CD8-positive, alpha-beta memory T cell (primary cell): ENCODE measurements at regions of chr11 and their contacts with region 1.

Region 1: DNA sequence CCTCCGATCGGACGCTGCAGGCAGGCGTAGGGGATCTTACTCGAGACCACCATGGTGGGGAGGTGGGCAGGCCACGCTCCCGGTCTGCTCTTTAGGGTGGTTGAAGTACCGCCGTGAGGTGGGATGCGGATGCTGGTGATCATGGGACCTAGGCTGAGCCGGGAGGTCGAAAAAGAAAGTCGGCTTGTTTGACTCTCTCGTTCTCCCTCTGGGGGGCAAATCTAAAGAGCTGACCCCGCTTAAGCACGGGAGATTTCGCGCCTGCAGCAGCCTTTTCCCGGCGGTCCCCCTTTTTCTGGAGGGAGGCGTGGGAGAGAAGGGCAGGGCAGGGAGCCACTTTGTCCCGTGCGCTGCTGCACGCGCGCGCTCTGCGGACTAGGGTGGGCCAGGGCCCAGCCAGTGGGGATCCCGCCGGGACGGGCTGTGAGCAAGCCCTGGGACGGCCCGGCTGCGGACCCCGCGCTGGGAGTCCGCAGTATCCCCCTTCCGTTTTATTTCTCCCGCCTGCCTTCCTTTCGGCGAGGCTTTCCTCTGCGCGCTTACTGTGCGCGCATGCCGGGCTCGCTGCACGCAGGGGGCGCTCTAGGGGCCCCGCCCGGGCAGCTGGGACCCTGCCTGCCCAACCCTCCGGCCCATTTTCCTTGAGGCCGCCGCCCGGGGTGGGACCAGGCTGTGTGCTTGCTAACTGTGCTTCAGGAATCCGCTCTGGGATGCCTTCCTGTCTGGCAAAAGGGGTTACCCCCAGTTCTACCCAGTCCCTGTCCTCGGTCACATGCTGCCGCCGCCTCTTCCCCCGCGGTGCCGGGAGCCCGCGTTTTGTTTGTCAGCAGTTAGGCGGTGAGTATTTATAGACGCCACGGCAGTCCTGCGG is 81.0 kb downstream of the PRR5L start:
- DNase-seq: peak; percentile 2 to 75 (median 53)
- H3K4me3 ChIP-seq: peak overlapping the region; percentile 84
- H3K4me3 Mint-ChIP-seq: peak overlapping the region; percentile 99 to 100 (median 99)
- H3K27ac ChIP-seq: peak overlapping the region; percentile 76
- H3K27ac Mint-ChIP-seq: peak overlapping the region; percentile 70 to 98 (median 96)
- H3K4me1 ChIP-seq: peaks cover 19% of the 10 kb centered on the region
- H3K4me1 Mint-ChIP-seq: peaks cover 43 to 66% (median 65%) of the 10 kb centered on the region in 3 donors
- H3K27me3 ChIP-seq: no peaks in the 10 kb centered on the region
- H3K27me3 Mint-ChIP-seq: peaks cover 4 to 7% of the 10 kb centered on the region in 2 donors

Region 2: DNA sequence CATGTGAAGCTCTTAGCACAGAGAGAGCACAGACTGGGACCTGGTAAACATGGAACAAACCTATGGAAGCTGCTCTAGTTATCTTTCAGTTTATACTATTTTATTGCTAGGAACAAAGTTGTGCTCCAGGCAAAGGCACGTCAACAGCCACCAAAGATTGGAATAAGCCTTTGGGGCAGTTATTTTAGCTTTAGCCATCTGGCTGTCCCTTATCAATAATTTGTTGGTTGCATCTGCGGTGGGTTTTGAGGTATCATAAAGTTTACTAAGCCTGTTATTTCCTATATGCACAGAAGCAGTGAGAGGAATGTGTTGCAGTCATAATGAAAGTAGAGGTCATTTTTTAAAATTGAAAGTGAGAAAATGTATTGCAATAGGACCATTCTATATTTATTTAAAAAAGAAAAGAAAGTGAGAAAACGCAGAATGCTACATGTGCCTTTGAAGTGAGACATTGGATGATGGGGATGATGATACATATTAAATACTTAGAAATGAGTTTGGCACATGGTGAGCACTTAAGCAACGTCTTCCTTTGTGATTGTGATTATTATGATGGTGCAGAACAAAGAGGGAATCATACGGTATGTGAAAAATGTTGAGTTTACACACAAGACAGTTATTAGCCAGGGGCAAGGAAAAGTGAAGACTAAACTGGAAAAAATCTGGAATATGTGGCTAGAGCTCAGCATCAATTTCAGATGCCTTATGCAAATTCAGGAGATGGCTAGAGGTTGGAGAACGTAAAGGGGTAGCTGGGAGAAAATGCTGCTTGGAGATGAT is 22.7 kb before region 1 on chr11:
- CTCF ChIA-PET with region 1: interaction called, 45 read pairs
- POLR2A ChIA-PET with region 1: interaction called, 20 read pairs
- DNase-seq: no peak
- H3K4me3 ChIP-seq: no peak overlapping the region
- H3K4me3 Mint-ChIP-seq: peak overlapping the region in 2 of 7 donors; percentile 10 to 52
- H3K27ac ChIP-seq: no peak overlapping the region
- H3K27ac Mint-ChIP-seq: peak overlapping the region in 7 of 8 donors; percentile 20 to 91 (median 72)
- H3K4me1 ChIP-seq: peaks cover 23% of the 10 kb centered on the region
- H3K4me1 Mint-ChIP-seq: peaks cover 46 to 83% (median 75%) of the 10 kb centered on the region in 3 donors
- H3K27me3 ChIP-seq: no peaks in the 10 kb centered on the region
- H3K27me3 Mint-ChIP-seq: peaks cover 0 to 9% of the 10 kb centered on the region in 2 donors

Region 3: GRCh38 chr11:36363361-36364268 is 13.5 kb before region 1 on chr11:
- CTCF ChIA-PET with region 1: interaction called, 22 read pairs
- POLR2A ChIA-PET with region 1: interaction called, 8 read pairs
- DNase-seq: no peak
- H3K4me3 ChIP-seq: no peak overlapping the region
- H3K4me3 Mint-ChIP-seq: peak overlapping the region in 3 of 7 donors; percentile 19 to 56 (median 25)
- H3K27ac ChIP-seq: no peak overlapping the region
- H3K27ac Mint-ChIP-seq: peak overlapping the region in 5 of 8 donors; percentile 44 to 78 (median 65)
- H3K4me1 ChIP-seq: peaks cover 14% of the 10 kb centered on the region
- H3K4me1 Mint-ChIP-seq: peaks cover 30 to 62% (median 62%) of the 10 kb centered on the region in 3 donors
- H3K27me3 ChIP-seq: no peaks in the 10 kb centered on the region
- H3K27me3 Mint-ChIP-seq: peaks cover 4 to 8% of the 10 kb centered on the region in 2 donors

Region 4: DNA sequence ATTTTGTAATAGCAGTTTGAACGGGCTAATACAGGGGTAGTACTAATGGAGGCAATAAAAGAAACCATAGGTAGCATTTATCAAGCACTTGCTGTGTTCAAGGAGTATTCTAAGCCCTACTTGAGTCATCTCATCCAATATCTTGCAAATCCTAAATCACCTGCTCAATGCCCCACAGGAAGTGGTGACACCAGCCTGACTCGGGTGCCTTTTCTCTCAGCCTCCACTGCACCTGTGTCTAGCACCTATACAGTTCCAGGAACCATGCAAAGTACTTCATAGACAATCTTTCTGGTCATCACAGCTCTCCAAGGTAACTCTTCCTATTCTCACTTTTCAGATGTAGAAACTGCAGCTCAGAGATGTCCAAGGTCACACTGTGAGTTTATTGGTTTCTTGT is 16.9 kb after region 1 on chr11:
- CTCF ChIA-PET with region 1: interaction called, 20 read pairs
- POLR2A ChIA-PET with region 1: interaction called, 3 read pairs
- DNase-seq: no peak
- H3K4me3 ChIP-seq: no peak overlapping the region
- H3K4me3 Mint-ChIP-seq: peak overlapping the region in 5 of 7 donors; percentile 9 to 19 (median 9)
- H3K27ac ChIP-seq: no peak overlapping the region
- H3K27ac Mint-ChIP-seq: peak overlapping the region; percentile 18 to 84 (median 50)
- H3K4me1 ChIP-seq: peaks cover 25% of the 10 kb centered on the region
- H3K4me1 Mint-ChIP-seq: peaks cover 53 to 82% (median 64%) of the 10 kb centered on the region in 3 donors
- H3K27me3 ChIP-seq: no peaks in the 10 kb centered on the region
- H3K27me3 Mint-ChIP-seq: no peaks in the 10 kb centered on the region

Region 5: GRCh38 chr11:36411202-36411640 is 34.1 kb after region 1 on chr11:
- CTCF ChIA-PET with region 1: interaction called, 21 read pairs
- POLR2A ChIA-PET with region 1: interaction called, 3 read pairs
- DNase-seq: peak in 1 of 5 donors; percentile 9
- H3K4me3 ChIP-seq: no peak overlapping the region
- H3K4me3 Mint-ChIP-seq: peak overlapping the region; percentile 63 to 86 (median 79)
- H3K27ac ChIP-seq: peak overlapping the region; percentile 3
- H3K27ac Mint-ChIP-seq: peak overlapping the region; percentile 81 to 99 (median 94)
- H3K4me1 ChIP-seq: peaks cover 49% of the 10 kb centered on the region
- H3K4me1 Mint-ChIP-seq: peaks cover 75 to 84% (median 82%) of the 10 kb centered on the region in 3 donors
- H3K27me3 ChIP-seq: no peaks in the 10 kb centered on the region
- H3K27me3 Mint-ChIP-seq: peaks cover 0 to 3% of the 10 kb centered on the region in 2 donors